ENCODE measurements at regions of chr6 and their contacts with region 1.

Region 1: GRCh38 chr6:129683601-129684322 is 26.2 kb downstream of the ARHGAP18 start:
- DNase-seq: peak; percentile 81
- H3K4me3 Mint-ChIP-seq: peak overlapping the region; percentile 30
- H3K27ac Mint-ChIP-seq: peak overlapping the region; percentile 76
- H3K4me1 Mint-ChIP-seq: peaks cover 44% of the 10 kb centered on the region
- H3K27me3 Mint-ChIP-seq: no peaks in the 10 kb centered on the region

Region 2: DNA sequence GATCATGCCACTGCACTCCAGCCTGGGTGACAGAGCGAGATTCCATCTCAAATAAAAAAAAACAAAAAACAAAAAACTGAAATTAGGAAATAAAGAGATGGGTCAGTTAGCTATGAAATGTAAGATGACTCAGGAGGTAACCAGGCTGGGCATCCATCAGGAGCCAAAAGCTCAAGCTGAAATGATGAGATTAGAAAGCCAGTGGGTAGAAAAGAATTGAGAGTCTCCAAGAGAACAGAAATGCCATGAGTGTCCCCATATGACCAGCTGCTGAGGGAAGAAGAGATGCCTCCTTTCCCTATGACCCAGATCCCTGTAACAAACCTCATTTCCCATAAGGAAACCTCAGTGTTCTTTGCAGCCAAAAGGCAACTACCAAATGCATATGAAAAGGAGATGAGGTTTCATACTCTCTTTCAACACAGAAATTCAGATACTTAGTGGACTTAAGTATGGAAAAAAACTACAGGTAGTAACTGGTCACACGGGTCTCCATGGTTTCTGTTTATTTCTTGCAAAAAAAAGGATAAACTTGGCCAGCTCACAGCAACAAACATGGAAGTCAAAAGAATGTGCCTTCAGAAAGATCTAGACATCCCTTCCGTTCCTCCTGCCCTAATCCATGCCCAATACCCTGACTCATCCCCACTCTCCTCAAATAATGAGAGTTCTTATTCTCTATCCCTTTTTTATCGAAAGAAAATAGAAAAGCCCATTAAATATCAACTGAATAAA is 18.1 kb after region 1 on chr6:
- CTCF ChIA-PET with region 1: no interaction called
- POLR2A ChIA-PET with region 1: no interaction called
- intact Hi-C with region 1: loop called (anchors 2 kb)
- DNase-seq: no peak
- H3K4me3 Mint-ChIP-seq: no peak overlapping the region
- H3K27ac Mint-ChIP-seq: no peak overlapping the region
- H3K4me1 Mint-ChIP-seq: peaks cover 5% of the 10 kb centered on the region
- H3K27me3 Mint-ChIP-seq: no peaks in the 10 kb centered on the region

Region 3: GRCh38 chr6:129709769-129710449 is 26.1 kb after region 1 on chr6 and contains the start of gene ARHGAP18:
- CTCF ChIA-PET with region 1: no interaction called
- POLR2A ChIA-PET with region 1: interaction called, 9 read pairs
- intact Hi-C with region 1: loop called (anchors 1 kb)
- DNase-seq: peak; percentile 87
- H3K4me3 Mint-ChIP-seq: peak within 1 kb of the TSS; percentile 86
- H3K27ac Mint-ChIP-seq: peak within 1 kb of the TSS; percentile 33
- H3K4me1 Mint-ChIP-seq: peaks cover 33% of the 10 kb centered on the region
- H3K27me3 Mint-ChIP-seq: no peaks in the 10 kb centered on the region
- total RNA-seq, gene ARHGAP18: 7.0 to 9.2 TPM

Region 4: DNA sequence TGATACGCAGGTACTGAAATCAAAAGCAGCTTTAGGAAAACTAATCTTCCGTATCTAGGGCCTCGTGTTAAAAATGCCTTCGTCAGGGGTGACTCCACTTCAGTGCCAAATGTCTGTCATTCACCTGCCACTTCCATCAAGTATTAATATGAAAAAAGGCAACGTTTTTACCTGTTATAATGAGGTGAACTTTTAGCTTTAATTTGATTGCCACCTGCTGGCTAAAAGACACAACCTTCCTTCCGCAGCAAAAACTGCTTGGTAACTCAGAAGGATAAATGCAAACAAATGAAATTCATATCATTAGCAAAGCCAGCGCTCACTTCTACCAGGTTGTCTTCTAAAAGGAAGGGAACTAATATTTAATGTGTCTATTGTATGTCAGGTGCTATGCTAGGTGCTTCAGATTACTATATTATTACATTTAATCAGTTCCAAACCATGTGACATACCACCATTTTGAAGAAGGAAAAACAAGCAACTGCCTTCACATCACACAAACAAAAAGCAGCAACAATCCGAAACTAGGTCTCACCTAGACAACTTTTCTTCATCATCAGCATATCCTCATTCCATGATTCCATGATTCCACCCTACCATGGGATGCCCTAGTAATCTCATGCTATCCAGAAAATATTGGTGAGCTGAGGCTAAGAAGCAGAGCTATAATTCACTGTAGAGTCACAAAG is 46.9 kb after region 1 on chr6:
- CTCF ChIA-PET with region 1: interaction called, 4 read pairs
- POLR2A ChIA-PET with region 1: no interaction called
- intact Hi-C with region 1: loop called (anchors 1 kb)
- DNase-seq: peak; percentile 19
- H3K4me3 Mint-ChIP-seq: no peak overlapping the region
- H3K27ac Mint-ChIP-seq: no peak overlapping the region
- H3K4me1 Mint-ChIP-seq: peaks cover 11% of the 10 kb centered on the region
- H3K27me3 Mint-ChIP-seq: no peaks in the 10 kb centered on the region

Region 5: DNA sequence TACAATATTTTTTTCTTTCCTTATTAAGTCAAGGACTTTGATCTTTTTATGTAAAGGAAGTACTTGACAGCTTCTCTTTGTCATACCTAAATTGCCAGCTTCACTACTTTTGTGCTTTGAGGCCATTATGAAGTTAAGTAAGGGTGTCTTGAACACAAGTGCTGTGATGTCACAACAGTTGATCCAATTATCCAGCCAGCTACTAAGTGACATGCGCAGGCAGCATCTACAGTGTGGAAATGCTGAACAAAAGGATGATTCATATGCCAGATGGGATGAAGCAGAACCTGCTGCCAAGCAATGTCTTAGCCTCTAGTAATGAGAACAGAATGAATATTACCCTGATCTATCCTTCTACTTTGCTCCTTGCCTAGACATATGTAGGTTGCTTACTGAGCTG is 245.7 kb after region 1 on chr6:
- CTCF ChIA-PET with region 1: no interaction called
- POLR2A ChIA-PET with region 1: no interaction called
- intact Hi-C with region 1: no loop called
- DNase-seq: no peak
- H3K4me3 Mint-ChIP-seq: no peak overlapping the region
- H3K27ac Mint-ChIP-seq: no peak overlapping the region
- H3K4me1 Mint-ChIP-seq: no peaks in the 10 kb centered on the region
- H3K27me3 Mint-ChIP-seq: no peaks in the 10 kb centered on the region